ENCODE measurements at regions of chr22 and their contacts with region 1.

Region 1: DNA sequence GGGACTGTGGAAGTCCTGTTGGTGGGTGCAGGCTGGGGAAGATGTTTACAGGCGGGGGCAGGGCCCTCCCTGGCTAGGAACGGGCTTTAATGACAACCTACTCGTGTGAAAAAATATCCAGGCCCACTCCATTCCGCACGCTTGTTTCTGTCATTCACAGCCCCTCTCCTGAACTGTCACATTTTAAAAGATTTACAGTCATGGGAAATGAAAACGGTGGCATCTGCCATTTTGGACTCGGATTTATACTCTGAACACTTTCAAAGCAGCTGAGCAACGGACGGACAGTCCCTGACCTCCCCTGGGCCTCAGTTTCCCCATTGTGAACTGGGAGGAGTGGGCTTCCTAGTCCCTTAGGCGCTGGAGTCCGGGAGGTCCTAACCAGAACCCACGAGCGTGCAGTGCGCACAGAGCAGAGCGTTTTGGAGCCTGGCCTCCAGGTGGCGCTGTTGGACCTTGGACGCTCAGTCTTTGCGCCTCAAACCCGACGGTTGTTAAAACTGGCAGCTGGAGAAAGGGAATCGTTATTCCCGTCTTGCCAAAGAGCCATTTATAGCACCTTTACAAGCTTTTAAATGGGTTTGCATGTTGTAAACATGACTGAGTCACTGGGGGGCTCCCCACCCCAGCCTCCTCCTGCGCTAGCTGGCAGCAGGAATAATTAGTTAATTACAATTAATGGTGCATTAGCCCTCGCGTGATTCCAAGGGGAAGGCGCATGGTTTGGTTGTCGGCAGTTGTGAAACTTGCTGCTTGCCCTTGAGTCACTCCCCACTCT is 75.3 kb downstream of the FBLN1 start:
- DNase-seq: peak; percentile 62 to 79 (median 76)
- H3K4me3 ChIP-seq: no peak overlapping the region
- H3K4me3 Mint-ChIP-seq: no peak overlapping the region
- H3K27ac ChIP-seq: no peak overlapping the region
- H3K27ac Mint-ChIP-seq: peak overlapping the region in 1 of 7 donors; percentile 45
- H3K4me1 ChIP-seq: peaks cover 8% of the 10 kb centered on the region in 2 donors
- H3K4me1 Mint-ChIP-seq: peaks cover 20% of the 10 kb centered on the region
- H3K27me3 ChIP-seq: peaks cover 0 to 12% of the 10 kb centered on the region in 2 donors
- H3K27me3 Mint-ChIP-seq: peaks cover 8 to 31% (median 23%) of the 10 kb centered on the region in 3 donors
- CTCF ChIP-seq: peak; percentile 96

Region 2: DNA sequence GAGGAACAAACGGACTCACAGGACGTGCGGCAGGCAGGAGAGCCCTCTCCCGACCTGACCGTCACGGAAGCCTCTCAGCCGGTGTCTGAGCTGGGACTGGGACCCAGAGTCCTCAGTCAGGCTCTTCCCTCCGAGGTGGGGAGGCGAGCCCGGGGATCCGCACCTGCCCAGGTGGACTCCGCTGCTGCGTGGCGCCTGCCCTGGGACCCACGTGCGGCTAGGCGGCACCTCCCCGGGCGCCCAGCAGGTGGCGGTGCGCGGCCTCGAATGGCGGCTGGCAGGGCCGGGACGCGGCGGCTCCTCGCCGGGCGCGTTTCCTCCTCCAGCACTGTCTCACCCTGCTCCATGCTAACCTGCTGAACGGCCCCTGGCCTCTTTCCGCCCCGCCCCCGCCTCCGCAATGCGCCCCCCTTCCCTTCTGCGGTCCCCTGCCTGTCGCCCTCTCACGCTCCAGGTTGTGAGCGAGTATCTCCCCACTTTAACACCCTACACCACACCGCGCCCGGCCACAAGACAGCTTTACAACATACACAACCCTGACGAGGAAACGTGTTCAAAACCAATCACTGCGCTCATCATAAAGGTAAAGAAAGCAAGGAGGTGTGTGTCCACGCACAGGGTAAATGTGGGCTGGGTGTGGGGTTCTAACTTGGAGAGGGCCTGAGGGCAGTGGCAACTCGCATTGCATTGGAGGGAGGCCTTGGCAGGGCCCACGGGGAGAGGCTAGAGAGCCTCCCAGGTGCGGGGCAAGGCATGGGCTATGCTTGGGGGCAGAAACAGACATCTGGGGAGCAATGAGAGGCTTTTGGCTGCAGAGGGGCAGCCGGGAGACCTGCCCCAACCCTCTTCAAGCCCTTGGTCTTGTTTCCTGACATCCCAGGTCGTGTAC is 67.8 kb after region 1 on chr22:
- intact Hi-C with region 1: loop called in 1 of 2 experiments (anchors 5 kb)
- DNase-seq: peak; percentile 35 to 59 (median 59)
- H3K4me3 ChIP-seq: no peak overlapping the region
- H3K4me3 Mint-ChIP-seq: peak overlapping the region in 1 of 2 donors; percentile 80
- H3K27ac ChIP-seq: no peak overlapping the region
- H3K27ac Mint-ChIP-seq: no peak overlapping the region
- H3K4me1 ChIP-seq: peaks cover 5 to 8% of the 10 kb centered on the region in 2 donors
- H3K4me1 Mint-ChIP-seq: peaks cover 13% of the 10 kb centered on the region
- H3K27me3 ChIP-seq: peaks cover 4 to 48% of the 10 kb centered on the region in 2 donors
- H3K27me3 Mint-ChIP-seq: peaks cover 46 to 72% (median 68%) of the 10 kb centered on the region in 3 donors
- CTCF ChIP-seq: peak; percentile 98

Region 3: DNA sequence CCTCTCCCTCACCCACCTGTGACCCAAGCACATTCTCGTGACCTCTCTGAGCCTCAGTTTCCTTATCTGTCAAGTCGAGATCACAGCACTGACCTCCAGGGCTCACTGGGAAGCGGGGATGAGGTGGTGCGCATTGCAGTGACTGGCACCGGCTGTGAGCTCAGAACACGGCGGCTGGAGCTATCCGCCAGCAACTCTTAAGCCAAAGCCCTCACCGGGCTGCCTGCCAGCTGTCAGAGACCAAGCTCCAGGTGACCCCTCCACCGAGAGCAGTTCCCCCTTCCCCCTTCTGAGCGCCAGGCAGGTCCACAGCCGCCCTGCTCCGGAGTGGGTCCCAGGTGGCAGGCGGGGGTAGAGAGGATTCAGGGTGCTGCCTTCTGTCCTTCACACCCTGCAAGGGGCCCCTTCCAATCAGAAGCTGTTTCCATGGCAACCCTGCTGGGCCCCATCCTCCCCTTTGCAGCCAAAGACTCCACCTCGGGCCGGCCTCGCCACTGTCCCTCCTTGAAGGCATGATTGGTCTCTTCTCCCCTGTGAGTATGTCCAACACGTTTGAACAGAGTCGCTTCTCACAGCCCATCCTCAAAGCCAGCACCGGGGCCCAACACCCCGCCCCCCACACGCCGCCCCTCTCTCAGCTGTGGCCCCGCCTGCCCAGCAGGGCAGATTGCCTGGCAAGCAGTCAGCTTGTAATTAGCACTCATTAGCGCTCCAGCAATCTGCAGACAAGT is 300.3 kb after region 1 on chr22:
- intact Hi-C with region 1: loop called in 1 of 2 experiments (anchors 10 kb)
- DNase-seq: no peak
- H3K4me3 ChIP-seq: no peak overlapping the region
- H3K4me3 Mint-ChIP-seq: peak overlapping the region in 1 of 2 donors; percentile 83
- H3K27ac ChIP-seq: no peak overlapping the region
- H3K27ac Mint-ChIP-seq: no peak overlapping the region
- H3K4me1 ChIP-seq: no peaks in the 10 kb centered on the region
- H3K4me1 Mint-ChIP-seq: no peaks in the 10 kb centered on the region
- H3K27me3 ChIP-seq: peaks cover 11 to 73% of the 10 kb centered on the region in 2 donors
- H3K27me3 Mint-ChIP-seq: peaks cover 59 to 85% (median 77%) of the 10 kb centered on the region in 3 donors
- CTCF ChIP-seq: no peak

Measured in CD14-positive monocyte (primary cell).